RWPE1 (cell line): ENCODE measurements at regions of chr1 and their contacts with region 1.

Region 1: DNA sequence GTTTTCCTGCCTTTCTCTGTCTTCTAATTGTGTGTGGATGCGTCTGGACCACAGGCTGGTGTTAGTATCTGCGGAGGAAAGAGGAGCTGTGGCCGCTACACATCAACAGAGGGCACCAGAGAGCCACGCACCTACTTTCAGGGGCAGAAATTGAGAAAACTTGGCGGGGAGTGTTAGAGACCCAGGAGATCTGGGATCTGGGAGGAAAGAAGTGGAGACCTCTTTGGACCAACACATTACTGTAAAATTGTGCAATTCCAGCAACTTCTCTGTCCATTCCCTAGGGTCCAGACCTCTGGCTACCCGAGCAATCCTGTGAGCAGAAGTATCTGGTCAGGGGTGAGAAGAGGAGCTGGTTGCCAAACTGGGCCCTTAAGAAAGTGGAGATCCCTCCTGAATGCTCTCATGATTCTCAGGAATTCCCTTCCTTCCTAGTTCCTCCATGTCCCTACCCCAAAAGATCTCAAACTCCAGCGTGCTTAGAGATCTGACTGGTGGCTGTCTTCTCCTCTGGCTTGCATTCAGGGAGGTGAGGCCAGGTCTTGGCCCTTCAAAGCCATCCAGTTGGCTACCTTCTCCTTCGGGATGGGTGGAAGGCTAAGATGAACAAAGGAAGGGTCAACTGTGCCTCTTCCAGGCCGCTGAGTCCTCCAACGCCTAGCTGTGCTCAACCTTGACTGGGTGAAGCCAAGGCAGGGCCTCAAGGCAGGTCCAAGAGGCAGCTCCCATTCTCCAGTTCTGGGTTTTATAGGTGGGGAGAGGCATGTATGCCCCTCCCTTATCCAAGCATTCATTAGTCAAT is 1.2 kb upstream of the KIRREL1 start:
- DNase-seq: peak; percentile 73
- H3K27ac ChIP-seq: peak overlapping the region; percentile 94
- CTCF ChIP-seq: peak; percentile 96

Region 2: GRCh38 chr1:157806431-157807149 is 185.6 kb before region 1 on chr1:
- CTCF ChIA-PET with region 1: no interaction called
- POLR2A ChIA-PET with region 1: no interaction called
- DNase-seq: no peak
- H3K27ac ChIP-seq: no peak overlapping the region
- CTCF ChIP-seq: no peak

Region 3: GRCh38 chr1:157969697-157970485 is 22.3 kb before region 1 on chr1:
- CTCF ChIA-PET with region 1: interaction called, 13 read pairs
- POLR2A ChIA-PET with region 1: no interaction called
- DNase-seq: peak; percentile 78
- H3K27ac ChIP-seq: peak overlapping the region; percentile 97; the same call in 1 of the 2 replicates
- CTCF ChIP-seq: peak; percentile 74

Region 4: DNA sequence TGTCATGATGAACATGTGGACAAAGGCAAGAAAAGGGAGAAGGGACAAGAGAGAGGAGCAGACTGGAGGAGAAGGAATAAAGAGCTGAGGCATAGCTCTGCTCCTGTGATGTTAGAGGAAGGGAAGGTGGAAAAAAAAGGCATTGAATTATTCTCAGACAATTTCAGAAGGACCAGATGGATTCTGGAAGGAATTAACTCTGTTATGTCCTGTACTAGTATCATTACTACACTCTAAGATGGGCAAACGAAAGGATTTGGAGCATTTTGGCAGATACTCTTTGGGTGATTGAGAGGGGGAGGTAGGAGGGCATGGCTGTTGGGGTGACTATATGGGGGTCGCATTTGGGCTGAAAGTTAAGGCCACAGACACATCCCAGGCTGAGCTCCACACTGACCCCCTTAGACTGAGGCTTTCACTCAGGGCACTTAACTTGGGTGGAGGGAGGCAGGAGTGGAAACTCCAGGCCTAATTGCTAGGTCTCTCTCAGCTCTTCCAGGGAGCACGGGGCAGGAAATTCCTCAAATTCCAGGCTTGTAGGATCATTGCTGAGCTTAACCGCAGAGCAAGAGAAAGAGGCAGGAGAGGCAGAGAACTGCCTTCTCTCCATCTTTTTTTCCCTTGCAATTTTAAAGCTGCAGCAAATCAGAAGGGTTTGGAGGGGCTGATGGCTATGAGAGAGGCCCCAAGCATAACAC is 27.1 kb after region 1 on chr1:
- CTCF ChIA-PET with region 1: interaction called, 11 read pairs
- POLR2A ChIA-PET with region 1: interaction called, 5 read pairs
- DNase-seq: peak; percentile 79
- H3K27ac ChIP-seq: peak overlapping the region; percentile 97
- CTCF ChIP-seq: no peak

Region 5: GRCh38 chr1:158035976-158036583 is 43.8 kb after region 1 on chr1:
- CTCF ChIA-PET with region 1: interaction called, 27 read pairs
- POLR2A ChIA-PET with region 1: no interaction called
- DNase-seq: no peak
- H3K27ac ChIP-seq: peak overlapping the region; percentile 92
- CTCF ChIP-seq: peak; percentile 65

Region 6: GRCh38 chr1:158087320-158087927 is 95.2 kb after region 1 on chr1:
- CTCF ChIA-PET with region 1: interaction called, 55 read pairs
- POLR2A ChIA-PET with region 1: interaction called, 4 read pairs
- DNase-seq: peak; percentile 73
- H3K27ac ChIP-seq: no peak overlapping the region
- CTCF ChIP-seq: peak; percentile 94

Region 7: DNA sequence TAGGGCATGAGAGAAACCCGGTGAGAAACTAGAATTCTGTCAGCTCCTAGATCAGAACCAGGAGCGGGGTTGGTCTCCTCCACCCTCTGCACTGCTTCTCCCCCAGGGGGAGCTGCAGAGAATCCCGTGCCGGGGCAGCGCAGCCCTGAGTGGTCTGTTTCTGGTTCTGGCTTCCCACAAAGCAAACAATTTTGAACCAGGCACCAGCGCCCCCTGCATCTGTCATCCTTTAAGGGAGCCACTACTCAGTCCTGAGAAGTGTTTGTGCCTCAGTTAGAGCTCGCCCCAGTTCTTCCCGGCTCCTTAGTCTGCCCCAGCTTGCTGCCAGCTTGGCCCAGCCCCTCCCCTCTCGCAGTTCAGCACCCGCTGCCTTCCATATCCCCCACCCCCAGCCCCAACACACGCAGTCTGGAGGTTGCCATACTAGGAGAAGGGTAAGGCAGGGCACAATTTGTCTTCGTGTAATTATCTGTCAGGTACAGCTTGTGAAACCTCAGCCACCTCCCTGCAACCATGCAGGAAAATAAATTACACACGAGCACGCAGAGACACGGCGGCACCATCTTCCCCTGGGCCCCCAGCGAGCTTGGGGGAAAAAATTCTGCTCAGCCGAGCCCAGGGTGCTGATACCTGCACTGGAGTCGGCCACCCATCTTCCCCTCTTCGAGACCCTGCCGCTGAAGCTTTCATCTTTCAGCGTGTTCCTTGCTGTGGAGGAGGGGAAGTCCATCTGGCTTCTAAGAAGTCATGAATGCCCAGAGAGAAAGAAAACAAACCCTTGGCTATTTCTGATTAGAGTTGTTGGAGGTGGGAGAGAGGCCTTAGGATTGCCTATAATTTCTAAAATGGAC is 125.8 kb after region 1 on chr1:
- CTCF ChIA-PET with region 1: interaction called, 38 read pairs
- POLR2A ChIA-PET with region 1: no interaction called
- DNase-seq: no peak
- H3K27ac ChIP-seq: no peak overlapping the region
- CTCF ChIP-seq: no peak

Region 8: GRCh38 chr1:158124999-158125398 is 132.8 kb after region 1 on chr1:
- CTCF ChIA-PET with region 1: interaction called, 38 read pairs
- POLR2A ChIA-PET with region 1: no interaction called
- DNase-seq: peak; percentile 87
- H3K27ac ChIP-seq: peak overlapping the region; percentile 23; the same call in 1 of the 2 replicates
- CTCF ChIP-seq: peak; percentile 90

Region 9: GRCh38 chr1:158140764-158141192 is 148.5 kb after region 1 on chr1:
- CTCF ChIA-PET with region 1: no interaction called
- POLR2A ChIA-PET with region 1: no interaction called
- DNase-seq: no peak
- H3K27ac ChIP-seq: no peak overlapping the region; the same call in 1 of the 2 replicates
- CTCF ChIP-seq: no peak